Sciatic nerve (tissue), 2 donors: ENCODE measurements at regions of chr22 and their contacts with region 1.

Region 1: GRCh38 chr22:40265783-40266182 is 80.5 kb upstream of the ADSL start:
- DNase-seq: no peak
- ATAC-seq: peak; percentile 7

Region 2: GRCh38 chr22:39820256-39820655 is 445.5 kb before region 1 on chr22:
- intact Hi-C with region 1: no loop called
- DNase-seq: no peak
- ATAC-seq: no peak

Region 3: GRCh38 chr22:40243891-40244290 is 21.9 kb before region 1 on chr22:
- intact Hi-C with region 1: no loop called
- DNase-seq: no peak
- ATAC-seq: no peak

Region 4: GRCh38 chr22:41038732-41039445 is 773.1 kb after region 1 on chr22:
- intact Hi-C with region 1: loop called (anchors 5 kb)
- DNase-seq: no peak
- ATAC-seq: no peak